Caco-2 (cell line): ENCODE measurements at regions of chr9 and their contacts with region 1.

Region 1: DNA sequence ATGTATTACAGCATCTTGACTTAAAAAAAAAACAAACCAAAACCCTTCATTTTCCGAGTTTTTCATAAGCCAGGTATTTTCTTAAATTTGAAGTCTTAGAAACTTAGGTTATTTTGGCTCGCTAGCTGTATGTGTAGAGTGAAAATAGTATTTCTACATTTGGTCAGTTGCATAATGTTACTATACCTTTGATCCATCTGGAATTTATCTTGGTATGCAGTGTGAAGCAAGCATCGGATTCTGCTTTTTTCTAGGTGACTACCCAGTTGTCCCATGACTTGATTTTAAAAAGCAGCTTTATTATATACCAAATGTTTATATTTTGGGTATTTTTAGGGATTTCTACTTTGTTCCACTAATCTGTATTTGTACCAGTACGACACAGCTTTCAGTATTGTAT is 27.7 kb downstream of the UBAP1 start:
- DNase-seq: peak in 1 of 2 experiments; percentile 36
- H3K4me3 ChIP-seq: no peak overlapping the region
- H3K4me3 Mint-ChIP-seq: no peak overlapping the region
- H3K27ac Mint-ChIP-seq: no peak overlapping the region
- H3K4me1 ChIP-seq: 0 out of 2 replicates have a peak, but pooled peaks cover 4% of the 10 kb centered on the region
- H3K4me1 Mint-ChIP-seq: no peaks in the 10 kb centered on the region
- H3K27me3 ChIP-seq: no peaks in the 10 kb centered on the region
- H3K27me3 Mint-ChIP-seq: no peaks in the 10 kb centered on the region
- CTCF ChIP-seq: no peak

Region 2: GRCh38 chr9:34178520-34179212 is 27.9 kb before region 1 on chr9 and contains the start of gene UBAP1:
- CTCF ChIA-PET with region 1: no interaction called
- POLR2A ChIA-PET with region 1: interaction called, 3 read pairs
- intact Hi-C with region 1: loop called (anchors 2 kb)
- DNase-seq: peak; percentile 96 to 97
- H3K4me3 ChIP-seq: peak within 1 kb of the TSS; percentile 69
- H3K4me3 Mint-ChIP-seq: peak within 1 kb of the TSS; percentile 100
- H3K27ac Mint-ChIP-seq: peak within 1 kb of the TSS; percentile 98
- H3K4me1 ChIP-seq: no peaks in the 10 kb centered on the region; the same call in 1 of the 2 replicates
- H3K4me1 Mint-ChIP-seq: no peaks in the 10 kb centered on the region
- H3K27me3 ChIP-seq: no peaks in the 10 kb centered on the region
- H3K27me3 Mint-ChIP-seq: no peaks in the 10 kb centered on the region
- CTCF ChIP-seq: no peak
- total RNA-seq, gene UBAP1: 32.5 and 33.2 TPM in 2 replicates